Gastrocnemius medialis (tissue), 4 donors: ENCODE measurements at regions of chr7 and their contacts with region 1.

Region 1: GRCh38 chr7:92447345-92448204 is at the start of gene GATAD1:
- DNase-seq: peak; percentile 87 to 89
- ATAC-seq: peak; percentile 93 to 96
- H3K4me3 ChIP-seq: peak within 1 kb of the TSS; percentile 78 to 99 (median 89)
- H3K27ac ChIP-seq: peak within 1 kb of the TSS; percentile 91 to 98 (median 92)
- H3K4me1 ChIP-seq: peaks cover 12 to 15% of the 10 kb centered on the region in 2 donors
- H3K27me3 ChIP-seq: no peaks in the 10 kb centered on the region
- CTCF ChIP-seq: peak; percentile 91 to 96 (median 94)
- POLR2A ChIP-seq: peak; percentile 68 to 69
- total RNA-seq, gene GATAD1: 7.3 to 29.8 (median 8.3) TPM

Region 2: GRCh38 chr7:91940572-91941341 is 506.8 kb before region 1 on chr7 and contains the start of gene AKAP9:
- in situ Hi-C with region 1: no loop called
- intact Hi-C with region 1: loop called (anchors 10 kb)
- DNase-seq: peak; percentile 88 to 90
- ATAC-seq: peak; percentile 81 to 87
- H3K4me3 ChIP-seq: peak within 1 kb of the TSS; percentile 76 to 98 (median 92)
- H3K27ac ChIP-seq: peak within 1 kb of the TSS; percentile 95 to 100 (median 98)
- H3K4me1 ChIP-seq: peaks cover 36 to 40% of the 10 kb centered on the region in 2 donors
- H3K27me3 ChIP-seq: no peaks in the 10 kb centered on the region
- CTCF ChIP-seq: peak in 1 of 5 experiments; percentile 3
- POLR2A ChIP-seq: peak; percentile 70 to 83
- total RNA-seq, gene AKAP9: 25.4 to 80.0 (median 40.6) TPM

Region 3: GRCh38 chr7:92178927-92179924 is 268.3 kb before region 1 on chr7 and contains the start of gene LRRD1:
- in situ Hi-C with region 1: no loop called
- intact Hi-C with region 1: loop called (anchors 2 kb)
- DNase-seq: peak; percentile 47 to 77
- ATAC-seq: peak; percentile 94 to 99
- H3K4me3 ChIP-seq: peak within 1 kb of the TSS; percentile 59 to 69 (median 62)
- H3K27ac ChIP-seq: peak within 1 kb of the TSS; percentile 52 to 76 (median 61)
- H3K4me1 ChIP-seq: no peaks in the 10 kb centered on the region
- H3K27me3 ChIP-seq: no peaks in the 10 kb centered on the region
- CTCF ChIP-seq: peak; percentile 77 to 99 (median 86)
- POLR2A ChIP-seq: no peak
- total RNA-seq, gene LRRD1: not detected

Region 4: GRCh38 chr7:92245487-92246362 is 201.8 kb before region 1 on chr7 and contains the starts of genes ANKIB1 and KRIT1:
- in situ Hi-C with region 1: loop called in 1 of 4 experiments (anchors 10 kb)
- intact Hi-C with region 1: loop called (anchors 2 kb)
- DNase-seq: peak; percentile 83 to 84
- ATAC-seq: peak; percentile 94 to 97
- H3K4me3 ChIP-seq: peak within 1 kb of the TSS; percentile 81 to 98 (median 84)
- H3K27ac ChIP-seq: peak within 1 kb of the TSS; percentile 86 to 98 (median 94)
- H3K4me1 ChIP-seq: peaks cover 28 to 38% of the 10 kb centered on the region in 2 donors
- H3K27me3 ChIP-seq: no peaks in the 10 kb centered on the region
- CTCF ChIP-seq: peak in 2 of 5 experiments; percentile 26 to 33
- POLR2A ChIP-seq: peak; percentile 39 to 56
- total RNA-seq, gene ANKIB1: 11.5 to 24.2 (median 12.5) TPM
- total RNA-seq, gene KRIT1: 28.7 to 47.6 (median 32.5) TPM

Region 5: GRCh38 chr7:92421676-92422435 is 25.7 kb before region 1 on chr7:
- in situ Hi-C with region 1: no loop called
- intact Hi-C with region 1: loop called (anchors 1 kb)
- DNase-seq: no peak
- ATAC-seq: no peak
- H3K4me3 ChIP-seq: no peak overlapping the region
- H3K27ac ChIP-seq: no peak overlapping the region
- H3K4me1 ChIP-seq: no peaks in the 10 kb centered on the region
- H3K27me3 ChIP-seq: peaks cover 0 to 5% (median 3%) of the 10 kb centered on the region in 3 donors
- CTCF ChIP-seq: no peak
- POLR2A ChIP-seq: no peak

Region 6: GRCh38 chr7:92489634-92490033 is 42.1 kb after region 1 on chr7:
- in situ Hi-C with region 1: no loop called
- intact Hi-C with region 1: loop called (anchors 5 kb)
- DNase-seq: peak; percentile 6 to 46
- ATAC-seq: peak; percentile 91 to 99
- H3K4me3 ChIP-seq: no peak overlapping the region
- H3K27ac ChIP-seq: peak overlapping the region in 3 of 4 donors; percentile 20 to 70 (median 37)
- H3K4me1 ChIP-seq: peaks cover 0 to 8% of the 10 kb centered on the region in 2 donors
- H3K27me3 ChIP-seq: no peaks in the 10 kb centered on the region
- CTCF ChIP-seq: no peak
- POLR2A ChIP-seq: no peak

Region 7: DNA sequence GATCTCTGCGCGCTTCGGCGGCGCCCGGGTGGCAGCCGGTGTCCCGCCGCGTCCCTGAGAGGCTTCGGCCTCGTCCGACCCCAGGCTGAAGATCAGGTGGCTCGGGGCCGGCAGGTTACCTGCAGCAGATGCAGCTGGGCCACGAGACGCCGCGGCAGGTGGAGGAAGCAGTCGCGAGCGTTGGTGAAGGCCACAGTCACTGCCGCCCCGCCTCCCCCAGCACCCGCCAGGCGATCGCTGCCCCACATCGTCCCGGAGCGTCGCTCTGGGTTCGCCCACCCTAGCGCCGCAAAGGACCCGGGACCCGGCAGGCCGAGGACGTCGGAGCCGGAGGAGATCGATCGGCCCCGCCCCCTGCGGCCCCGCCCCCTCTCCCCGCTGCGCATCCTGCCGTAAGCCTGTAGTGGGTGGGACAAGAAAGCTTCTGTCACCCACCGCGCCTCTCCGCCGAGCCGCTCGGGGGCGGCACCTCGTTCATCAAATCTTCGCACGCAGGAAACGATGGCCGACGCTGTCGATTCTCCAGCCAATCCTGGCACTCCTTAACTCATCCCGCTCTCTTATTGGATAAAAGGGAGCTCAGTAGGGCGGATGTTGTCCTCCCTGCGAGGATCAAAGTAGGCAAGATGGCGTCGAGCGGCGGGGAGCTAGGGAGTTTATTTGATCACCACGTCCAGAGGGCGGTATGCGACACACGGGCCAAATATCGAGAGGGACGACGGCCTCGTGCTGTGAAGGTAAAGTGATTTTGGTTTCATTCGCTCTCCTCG is 80.8 kb after region 1 on chr7 and contains the starts of genes PEX1 and RBM48:
- in situ Hi-C with region 1: no loop called
- intact Hi-C with region 1: loop called (anchors 5 kb)
- DNase-seq: peak; percentile 94 to 97
- ATAC-seq: peak; percentile 99
- H3K4me3 ChIP-seq: peak within 1 kb of the TSS; percentile 73 to 96 (median 88)
- H3K27ac ChIP-seq: peak within 1 kb of the TSS; percentile 81 to 90 (median 88)
- H3K4me1 ChIP-seq: peaks cover 18 to 19% of the 10 kb centered on the region in 2 donors
- H3K27me3 ChIP-seq: no peaks in the 10 kb centered on the region
- CTCF ChIP-seq: peak in 4 of 5 experiments; percentile 28 to 56 (median 39)
- POLR2A ChIP-seq: peak; percentile 33 to 52
- total RNA-seq, gene PEX1: 8.0 to 22.3 (median 12.3) TPM
- total RNA-seq, gene RBM48: 8.0 to 11.2 (median 8.8) TPM